ENCODE measurements at regions of chr9 and their contacts with region 1.

Region 1: DNA sequence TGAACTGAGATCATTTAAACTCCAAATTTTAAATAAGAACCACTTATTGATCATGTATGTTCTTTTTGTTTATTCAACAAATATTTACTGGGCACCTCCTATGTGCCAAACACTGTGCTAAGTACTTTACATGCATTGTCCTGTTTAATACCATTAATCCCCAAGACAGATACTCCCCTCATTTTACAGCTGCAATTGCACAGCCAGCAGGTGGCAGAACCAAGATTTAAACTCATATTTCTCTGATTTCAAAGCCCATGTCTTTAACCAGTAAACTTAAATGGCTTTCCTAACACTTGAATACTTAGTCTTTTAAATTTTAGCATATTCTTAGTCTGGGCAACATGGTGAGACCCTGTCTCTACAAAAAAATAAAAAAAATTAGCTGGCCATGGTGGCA is 43.4 kb upstream of the KIAA1958 start:
- DNase-seq: peak; percentile 39
- H3K4me3 ChIP-seq: no peak overlapping the region
- H3K27ac ChIP-seq: no peak overlapping the region
- H3K4me1 ChIP-seq: peaks cover 12% of the 10 kb centered on the region
- CTCF ChIP-seq: peak; percentile 79

Region 2: GRCh38 chr9:112465352-112465751 is 22.2 kb after region 1 on chr9:
- CTCF ChIA-PET with region 1: no interaction called
- POLR2A ChIA-PET with region 1: no interaction called
- intact Hi-C with region 1: no loop called
- DNase-seq: no peak
- H3K4me3 ChIP-seq: no peak overlapping the region
- H3K27ac ChIP-seq: no peak overlapping the region
- H3K4me1 ChIP-seq: no peaks in the 10 kb centered on the region
- CTCF ChIP-seq: no peak

Region 3: GRCh38 chr9:112731971-112732370 is 288.8 kb after region 1 on chr9:
- CTCF ChIA-PET with region 1: no interaction called
- POLR2A ChIA-PET with region 1: no interaction called
- intact Hi-C with region 1: no loop called
- DNase-seq: no peak
- H3K4me3 ChIP-seq: no peak overlapping the region
- H3K27ac ChIP-seq: no peak overlapping the region
- H3K4me1 ChIP-seq: no peaks in the 10 kb centered on the region
- CTCF ChIP-seq: no peak

Region 4: GRCh38 chr9:112819635-112820496 is 376.7 kb after region 1 on chr9:
- CTCF ChIA-PET with region 1: interaction called, 3 read pairs
- POLR2A ChIA-PET with region 1: no interaction called
- intact Hi-C with region 1: loop called (anchors 5 kb)
- DNase-seq: peak; percentile 61
- H3K4me3 ChIP-seq: no peak overlapping the region
- H3K27ac ChIP-seq: no peak overlapping the region
- H3K4me1 ChIP-seq: peaks cover 3% of the 10 kb centered on the region
- CTCF ChIP-seq: peak; percentile 94